CD8-positive, alpha-beta memory T cell (primary cell): ENCODE measurements at regions of chr17 and their contacts with region 1.

Region 1: DNA sequence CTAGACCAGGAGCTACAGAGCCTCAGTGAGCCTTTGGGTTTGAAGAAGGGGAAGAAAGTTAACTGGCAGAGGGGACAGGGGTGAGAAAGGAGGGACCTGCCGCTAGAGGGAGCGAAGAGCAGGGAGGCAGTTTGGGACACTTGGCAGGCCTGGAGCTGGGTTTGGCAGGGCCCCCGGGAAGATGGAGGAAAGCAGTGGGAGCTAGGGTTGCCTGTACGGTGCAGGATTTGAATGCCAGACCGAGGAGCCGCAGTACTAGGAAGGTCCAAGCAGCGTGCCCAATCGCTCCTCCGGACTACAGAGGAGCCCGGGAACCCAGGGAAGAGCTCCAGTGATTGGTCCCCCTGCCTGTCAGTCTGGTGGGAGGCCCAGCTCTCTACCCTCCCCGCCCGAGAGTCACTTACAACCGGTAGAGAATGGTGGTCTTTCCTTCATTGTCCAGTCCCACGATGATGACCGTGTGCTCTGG is 1.3 kb downstream of the ARL5C start:
- DNase-seq: peak; percentile 62 to 85 (median 79)
- H3K4me3 ChIP-seq: peak overlapping the region; percentile 92
- H3K4me3 Mint-ChIP-seq: peak overlapping the region; percentile 91 to 98 (median 94)
- H3K27ac ChIP-seq: no peak overlapping the region
- H3K27ac Mint-ChIP-seq: peak overlapping the region in 7 of 8 donors; percentile 19 to 98 (median 82)
- H3K4me1 ChIP-seq: peaks cover 16% of the 10 kb centered on the region
- H3K4me1 Mint-ChIP-seq: peaks cover 31 to 41% (median 32%) of the 10 kb centered on the region in 3 donors
- H3K27me3 ChIP-seq: no peaks in the 10 kb centered on the region
- H3K27me3 Mint-ChIP-seq: peaks cover 0 to 3% of the 10 kb centered on the region in 2 donors

Region 2: GRCh38 chr17:39092692-39093230 is 71.9 kb before region 1 on chr17:
- CTCF ChIA-PET with region 1: interaction called, 18 read pairs
- POLR2A ChIA-PET with region 1: interaction called, 3 read pairs
- DNase-seq: peak in 2 of 5 donors; percentile 21 to 61
- H3K4me3 ChIP-seq: peak overlapping the region; percentile 49
- H3K4me3 Mint-ChIP-seq: peak overlapping the region; percentile 77 to 93 (median 82)
- H3K27ac ChIP-seq: no peak overlapping the region
- H3K27ac Mint-ChIP-seq: peak overlapping the region; percentile 88 to 99 (median 94)
- H3K4me1 ChIP-seq: peaks cover 86% of the 10 kb centered on the region
- H3K4me1 Mint-ChIP-seq: peaks cover 62 to 78% (median 70%) of the 10 kb centered on the region in 3 donors
- H3K27me3 ChIP-seq: no peaks in the 10 kb centered on the region
- H3K27me3 Mint-ChIP-seq: no peaks in the 10 kb centered on the region

Region 3: GRCh38 chr17:39174907-39175694 is 10.4 kb after region 1 on chr17:
- CTCF ChIA-PET with region 1: interaction called, 83 read pairs
- POLR2A ChIA-PET with region 1: interaction called, 8 read pairs
- DNase-seq: peak; percentile 67 to 86 (median 72)
- H3K4me3 ChIP-seq: no peak overlapping the region
- H3K4me3 Mint-ChIP-seq: no peak overlapping the region
- H3K27ac ChIP-seq: no peak overlapping the region
- H3K27ac Mint-ChIP-seq: peak overlapping the region in 3 of 8 donors; percentile 23 to 86 (median 46)
- H3K4me1 ChIP-seq: peaks cover 5% of the 10 kb centered on the region
- H3K4me1 Mint-ChIP-seq: peaks cover 7 to 24% (median 16%) of the 10 kb centered on the region in 3 donors
- H3K27me3 ChIP-seq: no peaks in the 10 kb centered on the region
- H3K27me3 Mint-ChIP-seq: peaks cover 0 to 5% of the 10 kb centered on the region in 2 donors

Region 4: GRCh38 chr17:39199820-39200069 is 35.0 kb after region 1 on chr17:
- CTCF ChIA-PET with region 1: interaction called, 23 read pairs
- POLR2A ChIA-PET with region 1: interaction called, 10 read pairs
- DNase-seq: peak; percentile 81 to 94 (median 90)
- H3K4me3 ChIP-seq: peak overlapping the region; percentile 94
- H3K4me3 Mint-ChIP-seq: peak overlapping the region; percentile 92 to 99 (median 94)
- H3K27ac ChIP-seq: peak overlapping the region; percentile 99
- H3K27ac Mint-ChIP-seq: peak overlapping the region; percentile 97 to 100 (median 100)
- H3K4me1 ChIP-seq: peaks cover 54% of the 10 kb centered on the region
- H3K4me1 Mint-ChIP-seq: peaks cover 50 to 76% (median 58%) of the 10 kb centered on the region in 3 donors
- H3K27me3 ChIP-seq: no peaks in the 10 kb centered on the region
- H3K27me3 Mint-ChIP-seq: peaks cover 0 to 4% of the 10 kb centered on the region in 2 donors

Region 5: DNA sequence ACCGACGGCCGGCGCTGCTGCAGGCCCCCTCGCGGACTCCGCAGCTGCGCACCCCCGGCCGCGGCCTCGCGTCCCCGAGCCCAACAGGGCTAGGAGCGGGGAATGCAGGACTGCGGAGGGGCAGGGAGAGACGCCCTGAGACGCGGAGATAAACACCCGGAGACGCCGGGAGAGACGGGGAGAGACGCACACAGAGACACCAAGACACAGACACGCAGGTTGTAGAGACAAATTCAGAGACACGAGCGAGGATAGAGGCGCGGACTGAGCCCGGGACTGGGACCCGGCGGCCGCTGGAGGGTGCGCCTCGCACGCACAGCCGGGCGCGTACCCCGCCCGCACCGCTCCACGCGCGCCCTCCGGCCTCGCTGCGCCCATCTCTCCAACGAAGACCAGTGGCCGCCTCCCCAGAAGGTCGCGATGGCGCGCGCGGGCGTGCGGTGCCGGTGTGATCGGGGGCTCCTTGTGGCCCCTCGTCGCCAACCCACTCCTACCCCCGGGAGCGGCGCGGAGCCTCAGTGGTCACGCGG is 60.1 kb after region 1 on chr17:
- CTCF ChIA-PET with region 1: no interaction called
- POLR2A ChIA-PET with region 1: no interaction called
- DNase-seq: no peak
- H3K4me3 ChIP-seq: no peak overlapping the region
- H3K4me3 Mint-ChIP-seq: peak overlapping the region in 6 of 7 donors; percentile 66 to 83 (median 74)
- H3K27ac ChIP-seq: no peak overlapping the region
- H3K27ac Mint-ChIP-seq: peak overlapping the region in 1 of 8 donors; percentile 61
- H3K4me1 ChIP-seq: peaks cover 4% of the 10 kb centered on the region
- H3K4me1 Mint-ChIP-seq: peaks cover 6 to 16% (median 12%) of the 10 kb centered on the region in 3 donors
- H3K27me3 ChIP-seq: peaks cover 27% of the 10 kb centered on the region
- H3K27me3 Mint-ChIP-seq: peaks cover 41 to 44% of the 10 kb centered on the region in 2 donors

Region 6: GRCh38 chr17:39235555-39236449 is 71.1 kb after region 1 on chr17:
- CTCF ChIA-PET with region 1: interaction called, 19 read pairs
- POLR2A ChIA-PET with region 1: interaction called, 3 read pairs
- DNase-seq: peak; percentile 14 to 62 (median 48)
- H3K4me3 ChIP-seq: no peak overlapping the region
- H3K4me3 Mint-ChIP-seq: peak overlapping the region in 2 of 7 donors; percentile 5 to 26
- H3K27ac ChIP-seq: no peak overlapping the region
- H3K27ac Mint-ChIP-seq: peak overlapping the region; percentile 34 to 93 (median 83)
- H3K4me1 ChIP-seq: peaks cover 53% of the 10 kb centered on the region
- H3K4me1 Mint-ChIP-seq: peaks cover 33 to 45% (median 42%) of the 10 kb centered on the region in 3 donors
- H3K27me3 ChIP-seq: no peaks in the 10 kb centered on the region
- H3K27me3 Mint-ChIP-seq: peaks cover 7 to 13% of the 10 kb centered on the region in 2 donors

Region 7: DNA sequence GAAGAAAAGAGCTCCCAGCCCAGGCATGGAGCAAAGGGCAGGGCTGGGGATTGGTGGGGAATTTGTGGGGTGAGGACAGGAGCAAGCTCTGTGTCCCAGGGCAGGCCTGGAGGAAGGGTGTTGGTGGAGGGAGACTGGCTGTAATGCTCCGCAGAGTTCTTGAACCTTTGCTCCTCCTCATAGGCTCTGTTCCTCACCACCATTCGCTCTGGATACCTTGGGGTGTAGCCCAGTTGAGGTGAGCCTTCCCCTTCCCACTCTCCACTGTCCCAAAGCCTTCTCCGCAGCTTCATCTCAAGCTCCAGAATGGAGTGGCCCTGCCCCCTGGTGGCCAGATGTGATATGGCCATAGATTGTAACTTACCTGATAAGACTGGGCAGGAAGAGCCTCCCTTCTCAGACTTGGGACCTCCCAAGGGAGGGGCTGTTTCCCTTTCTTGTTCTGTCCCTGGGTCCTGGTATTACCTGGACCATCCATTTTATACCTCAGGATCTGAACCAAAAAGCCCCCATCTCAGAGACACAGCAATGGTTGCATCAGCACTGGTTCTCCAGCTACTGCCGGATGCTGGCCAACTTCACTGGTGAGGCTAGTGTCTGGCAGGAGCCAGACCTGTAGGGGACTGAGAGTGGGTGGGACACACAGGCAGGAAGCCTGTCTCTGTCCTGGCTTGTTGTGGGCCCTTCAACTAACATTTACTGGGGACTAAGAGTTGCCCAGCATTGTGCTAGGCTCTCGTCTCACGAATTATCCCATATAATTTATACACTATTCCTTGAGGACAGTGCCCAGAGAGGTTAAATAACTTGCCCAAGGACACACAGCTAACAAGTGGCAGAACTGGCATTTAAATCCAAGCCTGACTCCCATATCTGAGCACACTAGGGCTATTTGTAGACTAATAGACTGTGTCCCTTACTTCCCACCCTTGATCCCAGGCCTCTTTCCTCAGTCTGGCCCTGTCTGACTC is 80.2 kb after region 1 on chr17:
- CTCF ChIA-PET with region 1: interaction called, 23 read pairs
- POLR2A ChIA-PET with region 1: interaction called, 3 read pairs
- DNase-seq: peak; percentile 72 to 88 (median 81)
- H3K4me3 ChIP-seq: no peak overlapping the region
- H3K4me3 Mint-ChIP-seq: peak overlapping the region in 4 of 7 donors; percentile 41 to 55 (median 46)
- H3K27ac ChIP-seq: no peak overlapping the region
- H3K27ac Mint-ChIP-seq: peak overlapping the region in 7 of 8 donors; percentile 38 to 90 (median 54)
- H3K4me1 ChIP-seq: peaks cover 9% of the 10 kb centered on the region
- H3K4me1 Mint-ChIP-seq: peaks cover 9 to 14% (median 11%) of the 10 kb centered on the region in 3 donors
- H3K27me3 ChIP-seq: no peaks in the 10 kb centered on the region
- H3K27me3 Mint-ChIP-seq: peaks cover 2 to 7% of the 10 kb centered on the region in 2 donors